GM10248 (cell line): ENCODE measurements at regions of chr22 and their contacts with region 1.

Region 1: DNA sequence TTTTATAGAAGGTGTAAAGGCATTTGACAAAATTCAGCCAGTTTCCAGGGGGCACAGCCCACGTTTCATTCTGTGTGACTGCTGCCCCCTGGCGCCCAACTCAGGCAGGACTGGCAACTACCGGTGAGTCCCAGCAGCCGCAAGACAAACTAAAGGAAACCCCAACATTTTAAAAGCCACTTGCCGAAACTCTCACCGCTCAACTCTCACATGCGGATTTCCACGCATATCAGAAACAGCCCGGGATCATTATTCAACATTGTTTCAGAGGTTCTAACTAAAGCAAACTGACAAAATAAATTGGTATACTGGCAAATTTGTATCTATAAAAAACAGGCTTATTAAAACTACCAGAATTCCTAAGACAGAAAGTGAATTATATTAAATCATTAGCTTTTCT is 48.2 kb downstream of the MORC2 start:
- DNase-seq: peak; percentile 84
- CTCF ChIP-seq: peak; percentile 87

Region 2: GRCh38 chr22:30763815-30764686 is 156.4 kb before region 1 on chr22:
- CTCF ChIA-PET with region 1: interaction called, 52 read pairs
- POLR2A ChIA-PET with region 1: interaction called, 3 read pairs
- DNase-seq: peak; percentile 75
- CTCF ChIP-seq: peak; percentile 55

Region 3: GRCh38 chr22:30902496-30903357 is 17.7 kb before region 1 on chr22:
- CTCF ChIA-PET with region 1: interaction called, 21 read pairs
- POLR2A ChIA-PET with region 1: interaction called, 11 read pairs
- DNase-seq: peak; percentile 64
- CTCF ChIP-seq: no peak

Region 4: GRCh38 chr22:30908051-30908461 is 12.4 kb before region 1 on chr22:
- CTCF ChIA-PET with region 1: interaction called, 21 read pairs
- POLR2A ChIA-PET with region 1: interaction called, 11 read pairs
- DNase-seq: no peak
- CTCF ChIP-seq: no peak

Region 5: GRCh38 chr22:30931541-30932300 is 11.3 kb after region 1 on chr22:
- CTCF ChIA-PET with region 1: interaction called, 23 read pairs
- POLR2A ChIA-PET with region 1: no interaction called
- DNase-seq: no peak
- CTCF ChIP-seq: no peak

Region 6: DNA sequence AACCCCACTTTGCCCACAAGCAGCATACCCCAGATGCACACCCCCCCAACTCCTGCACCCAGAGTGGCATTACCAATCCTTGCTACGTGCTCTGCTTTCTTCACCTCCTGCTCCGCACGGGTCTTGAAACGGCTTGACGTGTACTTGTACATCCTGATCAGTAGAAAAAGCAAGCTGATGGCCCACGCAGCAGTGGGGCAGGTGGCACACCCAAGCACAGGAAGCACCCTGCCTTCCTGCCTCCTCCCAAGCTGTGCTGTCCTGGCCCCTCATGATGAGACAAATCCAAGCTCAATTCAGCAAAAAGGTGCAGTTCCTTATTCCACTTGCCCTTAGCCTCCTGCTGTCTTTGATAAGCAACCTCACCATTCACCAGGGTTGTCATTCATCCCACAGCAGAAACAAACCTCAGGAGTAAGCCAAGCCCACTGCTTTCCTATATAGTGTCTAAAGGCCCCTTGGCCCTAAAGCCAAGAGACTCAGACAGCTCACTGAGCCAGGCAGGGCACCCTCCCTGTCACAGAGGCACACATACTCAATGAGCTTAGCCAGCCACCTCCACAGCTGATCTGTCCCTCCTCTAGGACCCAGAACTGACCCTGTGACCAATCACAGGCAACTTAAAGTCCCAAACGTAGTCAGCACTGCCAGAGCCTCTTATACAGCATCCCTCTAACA is 20.4 kb after region 1 on chr22:
- CTCF ChIA-PET with region 1: interaction called, 11 read pairs
- POLR2A ChIA-PET with region 1: no interaction called
- DNase-seq: no peak
- CTCF ChIP-seq: no peak

Region 7: DNA sequence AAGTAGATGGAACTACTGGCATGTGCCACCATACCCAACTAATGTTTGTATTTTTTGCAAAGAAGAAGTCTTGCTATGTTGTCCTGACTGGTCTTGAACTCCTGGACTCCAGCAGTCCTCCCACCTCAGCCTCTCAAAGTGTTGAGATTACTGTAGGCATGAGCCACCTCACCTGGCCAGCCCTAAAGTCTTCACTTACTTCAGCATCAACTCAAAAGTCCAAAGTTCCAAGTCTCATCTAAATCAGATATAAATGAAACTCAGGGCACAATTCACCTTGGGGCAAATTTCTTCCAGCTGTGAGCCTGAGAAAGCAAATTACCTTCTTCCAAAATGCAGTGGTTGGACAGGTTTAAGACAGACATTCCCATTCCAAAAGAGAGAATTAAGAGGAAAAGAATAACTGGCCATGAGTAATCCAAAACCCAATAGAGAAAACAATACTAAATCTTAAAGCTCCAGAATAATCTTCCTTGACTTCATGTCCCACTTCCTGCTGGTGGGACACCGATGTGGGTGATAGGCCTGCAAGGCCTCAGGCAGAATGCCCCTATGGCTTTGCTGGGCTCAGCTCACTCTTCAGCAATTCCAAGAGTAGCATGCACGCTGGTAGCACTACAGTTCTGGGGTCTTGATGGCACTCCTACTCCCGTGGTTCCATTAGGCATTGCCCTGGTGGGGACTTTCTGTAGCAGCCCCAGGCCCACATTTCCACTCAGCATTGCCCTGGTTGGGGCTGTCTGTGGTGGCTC is 99.0 kb after region 1 on chr22:
- CTCF ChIA-PET with region 1: no interaction called
- POLR2A ChIA-PET with region 1: no interaction called
- DNase-seq: no peak
- CTCF ChIP-seq: no peak